A549 (cell line): ENCODE measurements at regions of chr5 and their contacts with region 1.

Region 1: GRCh38 chr5:157354800-157355199 is 88.9 kb downstream of the CYFIP2 start:
- DNase-seq: peak; percentile 19 to 21
- ATAC-seq: peak; percentile 56 to 86; a peak in 4 of 6 replicates
- H3K4me3 ChIP-seq: no peak overlapping the region
- H3K27ac ChIP-seq: no peak overlapping the region
- H3K4me1 ChIP-seq: no peaks in the 10 kb centered on the region
- CTCF ChIP-seq: peak; percentile 46
- EP300 ChIP-seq: no peak
- POLR2A ChIP-seq: no peak
- RAD21 ChIP-seq: peak in 1 of 2 experiments; percentile 19; a peak in 1 of 5 replicates

Region 2: GRCh38 chr5:157308836-157309465 is 45.8 kb before region 1 on chr5:
- CTCF ChIA-PET with region 1: no interaction called
- POLR2A ChIA-PET with region 1: no interaction called
- DNase-seq: no peak
- ATAC-seq: 0 out of 6 replicates have a peak, but pooled peaks of 1 of the 2 experiments have one; percentile 27
- H3K4me3 ChIP-seq: no peak overlapping the region
- H3K27ac ChIP-seq: no peak overlapping the region
- H3K4me1 ChIP-seq: no peaks in the 10 kb centered on the region
- CTCF ChIP-seq: no peak
- EP300 ChIP-seq: no peak
- POLR2A ChIP-seq: no peak
- RAD21 ChIP-seq: peak; percentile 19 to 33; a peak in 2 of 5 replicates

Region 3: DNA sequence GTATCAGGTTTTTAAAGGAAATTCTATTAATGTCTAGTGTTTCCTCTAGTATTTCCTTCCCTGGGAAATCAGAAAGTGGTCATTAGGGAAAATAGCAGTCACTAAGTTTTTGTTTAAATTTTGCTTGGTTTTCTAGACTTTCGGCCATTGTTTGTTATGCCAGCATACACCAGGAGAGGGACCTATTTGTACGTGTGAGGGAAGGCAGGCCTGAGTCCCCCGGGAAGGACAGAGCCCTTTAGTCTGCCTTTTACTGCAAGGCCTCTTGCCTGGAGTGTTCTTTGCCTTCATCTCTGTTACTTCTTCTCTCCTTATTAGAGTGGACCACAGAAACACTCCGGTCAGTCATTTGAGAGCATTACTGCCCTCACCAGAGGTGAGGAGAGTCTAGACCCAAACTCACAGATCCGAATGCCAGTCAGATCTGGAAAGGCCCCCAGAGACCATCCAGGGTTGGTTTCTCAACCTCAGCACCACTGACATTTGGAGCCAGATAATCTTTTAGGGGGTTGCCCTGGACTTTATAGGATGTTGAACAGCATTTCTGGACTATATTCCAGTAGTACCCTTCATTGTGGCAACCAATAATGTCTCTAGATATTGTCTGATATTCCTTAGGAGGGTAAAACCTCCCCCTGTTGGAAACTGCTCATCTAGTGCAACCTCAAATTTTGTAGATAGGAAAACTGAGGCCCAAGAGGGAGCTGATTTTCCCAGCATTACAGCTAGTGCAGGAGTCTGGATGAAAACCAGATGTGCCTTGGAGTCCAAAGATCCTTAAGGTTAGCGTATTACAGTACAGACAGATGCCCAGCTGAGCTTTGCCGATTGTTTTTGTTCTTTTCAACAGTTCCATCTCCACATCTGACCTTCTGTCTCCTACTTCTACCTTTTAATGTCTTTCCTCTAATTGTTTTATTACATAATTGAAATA is 12.2 kb after region 1 on chr5:
- CTCF ChIA-PET with region 1: interaction called, 15 read pairs
- POLR2A ChIA-PET with region 1: no interaction called
- DNase-seq: peak; percentile 52 to 74
- ATAC-seq: peak; percentile 76 to 93
- H3K4me3 ChIP-seq: no peak overlapping the region
- H3K27ac ChIP-seq: peak overlapping the region; percentile 1 to 64; a peak in 3 of 6 replicates
- H3K4me1 ChIP-seq: peaks cover 18% of the 10 kb centered on the region
- CTCF ChIP-seq: peak; percentile 59
- EP300 ChIP-seq: no peak
- POLR2A ChIP-seq: no peak
- RAD21 ChIP-seq: peak; percentile 87 to 96

Region 4: DNA sequence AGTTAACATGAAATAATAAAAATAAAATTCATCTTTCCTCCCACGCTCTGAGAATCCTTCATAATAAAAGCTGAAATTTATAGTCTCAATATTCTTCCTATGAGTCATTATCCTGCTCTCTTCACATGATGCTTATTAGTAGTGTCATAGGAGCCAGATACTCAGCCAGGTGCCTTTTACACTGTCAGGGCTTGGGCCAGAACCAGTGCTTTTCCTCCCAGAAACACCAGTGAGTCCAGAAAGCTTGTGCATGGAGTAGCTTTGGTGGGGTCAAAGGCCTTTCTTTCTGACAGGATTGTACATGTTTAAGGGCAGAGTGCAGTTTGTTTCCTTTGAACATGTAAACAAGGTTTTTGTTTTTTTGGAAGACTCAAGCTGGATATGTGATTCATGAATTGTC is 395.5 kb after region 1 on chr5:
- CTCF ChIA-PET with region 1: no interaction called
- POLR2A ChIA-PET with region 1: no interaction called
- DNase-seq: no peak
- ATAC-seq: no peak
- H3K4me3 ChIP-seq: no peak overlapping the region
- H3K27ac ChIP-seq: no peak overlapping the region
- H3K4me1 ChIP-seq: peaks cover 5% of the 10 kb centered on the region; the same call in 2 of the 3 replicates
- CTCF ChIP-seq: no peak
- EP300 ChIP-seq: no peak
- POLR2A ChIP-seq: no peak
- RAD21 ChIP-seq: no peak